Left ventricle myocardium superior (tissue), 1 donor: ENCODE measurements at regions of chr3 and their contacts with region 1.

Region 1: DNA sequence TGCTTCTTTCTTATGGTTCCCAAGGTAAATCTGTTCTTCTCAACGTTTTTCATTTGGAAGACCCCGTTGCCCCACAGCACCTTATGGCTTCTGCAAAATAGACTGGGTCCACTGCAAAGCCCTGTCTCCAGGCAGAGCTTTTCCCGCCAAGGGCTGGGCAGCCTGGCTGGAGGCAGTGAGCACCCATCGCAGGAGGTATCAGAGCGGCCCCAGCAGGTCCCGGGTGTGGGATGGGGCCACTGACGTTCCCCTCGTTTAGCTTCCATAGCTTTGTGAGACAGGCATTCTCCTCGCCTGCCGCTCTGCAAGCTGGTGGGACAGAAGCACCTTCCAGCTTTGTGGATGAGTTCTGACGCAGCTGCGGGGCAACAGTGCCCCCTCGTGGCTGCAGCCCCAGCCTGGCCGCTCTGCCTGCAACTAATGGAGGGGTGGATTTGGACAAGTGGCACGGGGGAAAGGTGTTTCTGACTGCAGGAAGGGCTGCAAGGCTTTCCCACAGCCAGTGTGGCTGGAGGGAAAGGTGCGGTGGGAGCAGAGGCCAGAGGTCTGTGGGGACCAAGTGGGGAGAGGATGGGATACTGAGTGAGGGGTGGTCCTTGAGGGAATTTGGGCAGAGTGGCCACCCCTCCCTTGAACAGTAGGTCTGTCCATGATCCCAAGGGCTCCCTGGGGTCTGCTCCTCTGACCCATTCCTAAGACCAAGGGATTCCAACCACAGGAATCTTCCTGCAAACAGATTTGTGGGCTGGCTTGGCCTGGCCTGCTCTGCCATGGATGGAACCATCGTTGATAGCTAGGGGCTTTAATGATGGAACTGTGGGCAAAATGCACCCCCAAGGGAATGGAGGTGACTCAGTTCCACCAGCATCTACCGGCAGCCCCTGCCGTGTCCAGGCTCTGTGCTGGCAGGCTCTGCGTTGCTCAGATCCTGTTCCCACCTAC is 99.4 kb downstream of the FBLN2 start:
- DNase-seq: peak; percentile 92
- ATAC-seq: peak; percentile 87

Region 2: GRCh38 chr3:13495921-13496723 is 152.2 kb before region 1 on chr3:
- intact Hi-C with region 1: loop called (anchors 2 kb)
- DNase-seq: peak; percentile 83
- ATAC-seq: peak; percentile 91